ENCODE measurements at regions of chr1 and their contacts with region 1.

Region 1: GRCh38 chr1:45011837-45012638 is at the start of gene UROD:
- DNase-seq: peak; percentile 98
- ATAC-seq: peak; percentile 85
- H3K4me3 Mint-ChIP-seq: peak within 1 kb of the TSS; percentile 77
- H3K27ac Mint-ChIP-seq: peak within 1 kb of the TSS; percentile 92
- H3K4me1 Mint-ChIP-seq: peaks cover 31% of the 10 kb centered on the region
- H3K27me3 Mint-ChIP-seq: no peaks in the 10 kb centered on the region
- CTCF ChIP-seq: no peak
- total RNA-seq, gene UROD: 109 to 113 TPM

Region 2: GRCh38 chr1:44970317-44970716 is 41.7 kb before region 1 on chr1:
- CTCF ChIA-PET with region 1: no interaction called
- POLR2A ChIA-PET with region 1: no interaction called
- intact Hi-C with region 1: no loop called
- DNase-seq: no peak
- ATAC-seq: no peak
- H3K4me3 Mint-ChIP-seq: no peak overlapping the region
- H3K27ac Mint-ChIP-seq: no peak overlapping the region
- H3K4me1 Mint-ChIP-seq: peaks cover 6% of the 10 kb centered on the region
- H3K27me3 Mint-ChIP-seq: no peaks in the 10 kb centered on the region
- CTCF ChIP-seq: no peak

Region 3: DNA sequence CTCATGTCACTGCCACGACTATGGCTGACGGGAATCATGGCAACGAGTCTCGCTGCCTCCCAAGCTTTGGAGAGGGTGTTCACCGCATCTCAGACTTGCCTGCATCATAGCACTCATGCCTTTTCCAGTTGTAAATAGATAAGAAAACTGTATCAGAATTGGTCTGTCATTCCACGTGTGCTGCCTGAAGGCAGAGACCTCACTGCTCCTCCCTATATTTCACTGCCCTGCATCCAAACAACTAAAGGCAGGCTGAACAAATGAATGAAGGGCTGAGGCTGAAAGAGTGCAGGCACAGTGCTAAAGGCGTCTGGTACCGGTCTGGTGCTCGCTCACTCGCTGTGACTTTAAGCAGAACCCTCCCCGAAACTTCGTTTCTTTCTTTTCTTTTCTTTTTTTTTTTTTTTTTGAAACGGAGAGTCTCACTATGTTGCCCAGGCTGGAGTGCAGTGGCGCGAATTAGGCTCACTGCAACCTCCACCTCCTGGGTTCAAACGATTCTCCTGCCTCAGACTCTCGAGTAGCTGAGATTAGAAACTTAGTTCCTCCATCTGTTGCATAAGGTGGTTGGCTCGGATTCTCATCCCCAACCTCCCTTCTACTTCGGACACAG is 26.2 kb before region 1 on chr1:
- CTCF ChIA-PET with region 1: interaction called, 7 read pairs
- POLR2A ChIA-PET with region 1: interaction called, 49 read pairs
- intact Hi-C with region 1: no loop called
- DNase-seq: no peak
- ATAC-seq: peak; percentile 2
- H3K4me3 Mint-ChIP-seq: peak overlapping the region; percentile 100
- H3K27ac Mint-ChIP-seq: peak overlapping the region; percentile 93
- H3K4me1 Mint-ChIP-seq: peaks cover 21% of the 10 kb centered on the region
- H3K27me3 Mint-ChIP-seq: no peaks in the 10 kb centered on the region
- CTCF ChIP-seq: no peak

Region 4: DNA sequence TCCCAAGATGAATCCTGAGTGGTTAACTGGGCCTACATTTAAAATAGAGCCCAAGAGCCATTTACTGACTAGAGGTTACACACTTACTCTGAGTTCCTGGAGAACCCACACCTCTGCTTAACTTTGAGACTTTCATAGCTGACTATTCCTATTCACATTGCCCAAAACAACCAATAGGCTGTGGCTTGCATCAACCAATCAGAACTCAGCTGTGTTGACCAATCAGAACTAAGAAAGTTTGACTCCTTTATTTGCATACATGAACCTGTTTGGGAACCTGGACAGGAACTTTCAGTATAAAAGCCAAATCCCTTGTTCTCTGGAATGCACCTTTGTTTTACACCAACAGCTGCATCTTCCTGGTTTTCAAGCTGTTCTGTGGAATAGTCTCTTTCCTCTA is 184.8 kb after region 1 on chr1:
- CTCF ChIA-PET with region 1: interaction called, 3 read pairs
- POLR2A ChIA-PET with region 1: no interaction called
- intact Hi-C with region 1: loop called (anchors 10 kb)
- DNase-seq: no peak
- ATAC-seq: peak; percentile 24
- H3K4me3 Mint-ChIP-seq: no peak overlapping the region
- H3K27ac Mint-ChIP-seq: no peak overlapping the region
- H3K4me1 Mint-ChIP-seq: no peaks in the 10 kb centered on the region
- H3K27me3 Mint-ChIP-seq: peaks cover 2% of the 10 kb centered on the region
- CTCF ChIP-seq: no peak

Region 5: DNA sequence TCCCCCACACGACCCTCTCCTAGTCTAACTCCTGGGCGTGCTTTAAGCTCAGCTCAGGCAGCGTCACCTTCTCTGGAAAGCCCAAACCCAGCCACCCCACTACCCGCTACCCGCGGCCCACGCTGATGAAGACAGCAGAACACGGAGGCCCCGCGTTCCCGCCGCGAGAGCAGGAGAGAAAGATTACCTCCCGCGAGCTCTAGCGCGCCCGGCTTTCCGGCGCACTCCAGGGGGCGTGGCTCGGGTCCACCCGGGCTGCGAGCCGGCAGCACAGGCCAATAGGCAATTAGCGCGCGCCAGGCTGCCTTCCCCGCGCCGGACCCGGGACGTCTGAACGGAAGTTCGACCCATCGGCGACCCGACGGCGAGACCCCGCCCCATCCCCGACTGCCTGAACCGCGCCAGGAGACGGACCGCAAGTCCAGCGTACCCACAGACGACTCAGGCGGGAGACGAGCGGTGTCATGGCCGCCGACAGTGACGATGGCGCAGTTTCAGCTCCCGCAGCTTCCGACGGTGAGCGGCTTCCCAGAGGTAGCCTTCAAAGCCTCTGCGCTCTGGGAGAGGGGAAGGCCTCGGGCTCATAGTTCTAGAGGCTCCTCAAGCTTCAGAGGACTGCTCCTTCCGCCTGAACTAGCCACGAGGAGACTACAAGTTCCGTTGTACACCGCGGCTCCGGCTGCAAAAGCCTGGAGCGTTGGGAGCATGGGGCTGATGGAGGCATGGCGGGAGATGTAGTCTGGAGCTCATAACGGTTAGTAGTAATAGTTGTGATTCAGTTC is 327.9 kb after region 1 on chr1 and contains the starts of genes MUTYH and TOE1:
- CTCF ChIA-PET with region 1: interaction called, 14 read pairs
- POLR2A ChIA-PET with region 1: interaction called, 33 read pairs
- intact Hi-C with region 1: no loop called
- DNase-seq: peak; percentile 97
- ATAC-seq: peak; percentile 87
- H3K4me3 Mint-ChIP-seq: peak within 1 kb of the TSS; percentile 99
- H3K27ac Mint-ChIP-seq: peak within 1 kb of the TSS; percentile 99
- H3K4me1 Mint-ChIP-seq: peaks cover 37% of the 10 kb centered on the region
- H3K27me3 Mint-ChIP-seq: no peaks in the 10 kb centered on the region
- CTCF ChIP-seq: no peak
- total RNA-seq, gene MUTYH: 51.4 to 54.5 TPM
- total RNA-seq, gene TOE1: 25.7 to 28.1 TPM